Heart left ventricle (tissue), 16 donors: ENCODE measurements at regions of chr21 and their contacts with region 1.

Region 1: GRCh38 chr21:17270229-17270628 is 242.6 kb upstream of the CXADR start:
- DNase-seq: peak in 2 of 5 donors; percentile 28 to 53
- ATAC-seq: peak; percentile 77 to 85 (median 84)
- H3K4me3 ChIP-seq: no peak overlapping the region
- H3K27ac ChIP-seq: no peak overlapping the region
- H3K4me1 ChIP-seq: no peaks in the 10 kb centered on the region
- H3K27me3 ChIP-seq: no peaks in the 10 kb centered on the region
- CTCF ChIP-seq: peak in 11 of 12 donors; percentile 17 to 66 (median 52)
- POLR2A ChIP-seq: no peak

Region 2: DNA sequence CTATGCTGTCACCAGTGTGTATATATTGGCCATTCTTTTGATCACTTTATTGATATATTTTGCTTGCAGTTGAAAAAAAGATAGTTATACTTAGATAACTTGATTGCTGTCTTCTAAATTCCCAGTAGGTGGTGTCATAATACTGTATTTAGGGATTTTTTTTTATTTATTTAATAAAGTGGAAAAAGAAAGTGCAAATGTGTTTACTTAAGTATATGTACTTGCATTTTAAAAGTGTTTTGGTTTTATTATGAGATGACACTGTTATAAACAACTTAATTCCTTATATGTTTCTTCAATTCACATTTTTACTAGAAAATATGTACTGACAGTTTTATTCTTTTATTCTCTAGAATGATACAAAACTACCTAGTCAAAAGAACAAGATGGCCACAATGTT is 1375.6 kb before region 1 on chr21:
- intact Hi-C with region 1: loop called in 1 of 10 experiments (anchors 5 kb)
- DNase-seq: no peak
- ATAC-seq: no peak
- H3K4me3 ChIP-seq: no peak overlapping the region
- H3K27ac ChIP-seq: no peak overlapping the region
- H3K4me1 ChIP-seq: peaks cover 0 to 10% (median 6%) of the 10 kb centered on the region in 12 donors
- H3K27me3 ChIP-seq: no peaks in the 10 kb centered on the region
- CTCF ChIP-seq: peak in 10 of 12 donors; percentile 16 to 61 (median 44)
- POLR2A ChIP-seq: no peak

Region 3: GRCh38 chr21:16002874-16003466 is 1267.3 kb before region 1 on chr21:
- intact Hi-C with region 1: loop called in 1 of 10 experiments (anchors 10 kb)
- DNase-seq: no peak
- ATAC-seq: no peak
- H3K4me3 ChIP-seq: no peak overlapping the region
- H3K27ac ChIP-seq: no peak overlapping the region
- H3K4me1 ChIP-seq: peaks cover 0 to 4% (median 0%) of the 10 kb centered on the region in 12 donors
- H3K27me3 ChIP-seq: no peaks in the 10 kb centered on the region
- CTCF ChIP-seq: peak in 9 of 12 donors; percentile 15 to 54 (median 33)
- POLR2A ChIP-seq: no peak

Region 4: GRCh38 chr21:16071092-16071491 is 1199.1 kb before region 1 on chr21:
- intact Hi-C with region 1: loop called in 1 of 10 experiments (anchors 10 kb)
- DNase-seq: peak in 1 of 5 donors; percentile 21
- ATAC-seq: no peak
- H3K4me3 ChIP-seq: peak overlapping the region in 4 of 12 donors; percentile 11 to 24 (median 22)
- H3K27ac ChIP-seq: no peak overlapping the region
- H3K4me1 ChIP-seq: no peaks in the 10 kb centered on the region
- H3K27me3 ChIP-seq: no peaks in the 10 kb centered on the region
- CTCF ChIP-seq: no peak
- POLR2A ChIP-seq: no peak

Region 5: DNA sequence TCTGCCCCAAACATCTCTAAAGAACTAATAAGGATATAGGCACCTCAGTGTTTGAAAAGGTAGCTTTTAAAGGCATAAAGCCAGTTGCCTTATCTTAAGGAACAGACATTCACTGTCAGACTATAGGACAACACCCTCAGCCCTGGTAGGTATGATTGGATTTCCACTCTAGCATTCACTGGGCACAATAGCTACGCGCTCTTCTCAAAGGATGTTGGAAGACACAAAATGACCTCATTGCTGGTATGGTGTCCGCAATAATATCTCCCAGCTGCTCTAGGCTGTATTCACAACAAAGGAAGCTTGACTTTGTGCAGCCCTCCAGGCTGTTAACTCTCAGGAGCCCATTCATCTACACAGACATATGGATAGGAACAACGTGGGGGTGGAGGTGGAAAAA is 123.2 kb after region 1 on chr21:
- intact Hi-C with region 1: no loop called
- DNase-seq: no peak
- ATAC-seq: no peak
- H3K4me3 ChIP-seq: no peak overlapping the region
- H3K27ac ChIP-seq: no peak overlapping the region
- H3K4me1 ChIP-seq: no peaks in the 10 kb centered on the region
- H3K27me3 ChIP-seq: no peaks in the 10 kb centered on the region
- CTCF ChIP-seq: no peak
- POLR2A ChIP-seq: no peak